ENCODE measurements at regions of chr11 and their contacts with region 1.

Region 1: GRCh38 chr11:46537537-46538295 is 56.1 kb downstream of the AMBRA1 start:
- DNase-seq: peak in 1 of 2 donors; percentile 60
- ATAC-seq: peak; percentile 42 to 83
- H3K4me3 ChIP-seq: no peak overlapping the region
- H3K27ac ChIP-seq: no peak overlapping the region
- H3K4me1 ChIP-seq: peaks cover 32 to 51% of the 10 kb centered on the region in 2 donors
- H3K27me3 ChIP-seq: no peaks in the 10 kb centered on the region
- CTCF ChIP-seq: peak; percentile 78 to 91 (median 86)
- POLR2A ChIP-seq: no peak

Region 2: GRCh38 chr11:46392421-46393230 is 145.1 kb before region 1 on chr11:
- in situ Hi-C with region 1: loop called in 2 of 4 experiments (anchors 10 kb)
- intact Hi-C with region 1: loop called (anchors 1 kb)
- DNase-seq: peak; percentile 54 to 78
- ATAC-seq: peak; percentile 80 to 87
- H3K4me3 ChIP-seq: peak overlapping the region; percentile 23 to 47 (median 36)
- H3K27ac ChIP-seq: no peak overlapping the region
- H3K4me1 ChIP-seq: peaks cover 19 to 23% of the 10 kb centered on the region in 2 donors
- H3K27me3 ChIP-seq: peaks cover 35 to 36% (median 36%) of the 10 kb centered on the region in 3 donors
- CTCF ChIP-seq: no peak
- POLR2A ChIP-seq: no peak

Region 3: DNA sequence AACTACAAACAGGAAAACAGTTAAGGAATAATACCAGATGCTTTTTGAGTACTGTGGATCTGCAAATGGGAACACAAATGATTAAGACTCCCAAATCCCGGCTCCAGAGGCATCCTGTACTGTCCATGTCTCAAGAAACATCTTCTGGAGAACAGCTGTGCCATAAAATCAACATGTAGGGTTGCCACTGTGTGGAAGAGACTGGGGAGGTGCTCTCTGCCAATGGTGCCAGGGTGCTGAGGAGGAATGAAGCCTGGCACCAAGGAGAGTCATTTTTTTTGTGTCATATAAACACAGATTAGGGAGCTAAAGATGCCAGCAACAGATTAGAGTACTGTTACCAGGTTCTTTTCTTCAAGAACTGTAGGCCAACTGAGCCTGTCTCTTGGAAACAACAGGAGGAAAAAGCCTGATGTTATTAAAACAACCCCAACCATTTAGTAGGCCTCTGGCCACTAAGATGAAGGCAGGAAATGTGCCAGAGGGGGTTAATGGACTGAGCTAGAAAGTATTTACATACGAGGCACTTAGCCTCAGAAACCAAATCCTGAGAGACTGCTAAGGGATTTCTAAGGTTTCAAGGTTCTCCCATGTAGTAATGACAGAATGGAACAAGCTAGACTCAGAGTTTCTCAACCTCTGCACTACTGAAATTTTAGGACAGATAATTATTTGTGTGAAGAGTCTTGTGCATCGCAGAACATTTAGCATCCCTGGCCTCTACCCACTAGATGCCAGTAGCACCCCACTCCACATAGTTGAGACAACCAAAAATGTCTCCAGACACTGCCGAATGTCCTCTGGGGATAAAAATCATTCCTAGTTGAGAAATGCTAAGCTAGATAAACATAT is 91.6 kb before region 1 on chr11:
- in situ Hi-C with region 1: no loop called
- intact Hi-C with region 1: loop called (anchors 5 kb)
- DNase-seq: no peak
- ATAC-seq: peak; percentile 28 to 30
- H3K4me3 ChIP-seq: no peak overlapping the region
- H3K27ac ChIP-seq: peak overlapping the region in 1 of 4 donors; percentile 0
- H3K4me1 ChIP-seq: peaks cover 19 to 45% of the 10 kb centered on the region in 2 donors
- H3K27me3 ChIP-seq: no peaks in the 10 kb centered on the region
- CTCF ChIP-seq: peak in 2 of 5 experiments; percentile 20 to 27
- POLR2A ChIP-seq: no peak

Region 4: DNA sequence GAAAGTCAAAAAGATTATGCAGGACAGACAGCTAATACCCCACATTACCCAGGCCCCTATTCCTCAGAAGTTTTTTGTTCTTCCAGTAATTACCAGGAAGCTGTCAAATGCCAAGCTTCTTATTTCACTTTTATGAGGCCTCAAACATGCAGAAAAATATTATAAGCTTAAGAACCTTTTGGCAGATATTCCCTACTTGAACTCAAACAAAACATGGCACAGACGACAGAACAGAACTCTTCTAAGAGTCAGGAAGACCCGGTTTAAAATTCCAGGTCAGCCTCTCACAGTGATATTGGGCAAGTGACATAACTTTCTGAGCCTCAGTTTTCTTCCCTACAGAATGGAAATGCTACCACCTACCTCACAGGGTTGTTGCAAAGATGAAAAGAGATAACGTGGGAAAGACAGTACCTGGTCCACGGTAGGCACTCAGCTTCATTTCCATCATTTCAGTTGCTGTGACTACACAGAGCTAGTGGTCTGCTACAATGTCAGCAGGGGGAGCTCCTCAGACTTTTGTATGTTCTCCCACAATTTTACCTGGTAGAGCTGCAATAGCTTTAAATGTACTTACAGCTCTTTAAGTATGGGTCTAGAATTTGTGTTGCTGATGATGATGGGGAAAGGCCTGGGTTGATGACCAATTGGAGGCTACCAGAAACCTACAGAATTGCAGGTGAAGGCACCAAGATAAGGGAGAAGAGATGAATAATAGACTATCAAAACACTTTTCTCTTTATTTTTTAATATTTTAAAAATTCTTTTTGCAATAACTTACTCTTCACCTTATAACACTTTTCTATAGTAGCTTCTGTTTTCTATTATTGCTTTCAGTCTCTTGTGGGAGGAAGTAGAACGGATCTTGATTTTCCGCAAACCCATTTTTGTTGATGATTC is 47.8 kb before region 1 on chr11:
- in situ Hi-C with region 1: no loop called
- intact Hi-C with region 1: loop called (anchors 5 kb)
- DNase-seq: no peak
- ATAC-seq: peak in 1 of 2 donors; percentile 33
- H3K4me3 ChIP-seq: no peak overlapping the region
- H3K27ac ChIP-seq: no peak overlapping the region
- H3K4me1 ChIP-seq: peaks cover 13 to 18% of the 10 kb centered on the region in 2 donors
- H3K27me3 ChIP-seq: no peaks in the 10 kb centered on the region
- CTCF ChIP-seq: peak in 4 of 5 experiments; percentile 6 to 44 (median 21)
- POLR2A ChIP-seq: no peak